Common myeloid progenitor, CD34-positive (primary cell): ENCODE measurements at regions of chr3 and their contacts with region 1.

Region 1: DNA sequence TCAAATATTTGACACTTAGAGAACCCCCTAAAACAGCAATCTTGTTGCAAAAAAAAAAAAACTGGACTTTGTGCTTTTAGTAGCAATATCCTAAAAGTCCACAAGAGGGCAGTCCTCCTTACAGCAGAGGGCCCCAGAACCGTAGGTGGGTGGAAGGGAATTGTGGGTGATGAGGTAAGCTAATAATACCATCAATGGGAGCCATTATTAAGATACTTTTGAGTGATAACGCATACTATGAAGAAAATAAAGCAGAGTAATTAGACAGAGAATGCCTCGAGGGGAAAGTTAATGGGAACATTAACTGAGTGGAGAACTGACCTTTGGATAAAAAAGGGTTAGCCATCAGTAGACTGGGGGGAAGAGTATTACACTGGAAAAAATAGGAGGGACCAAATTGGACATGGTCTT is 229.9 kb downstream of the THRB start:
- DNase-seq: peak; percentile 73 to 79 (median 77)
- H3K4me3 ChIP-seq: no peak overlapping the region
- H3K27ac ChIP-seq: no peak overlapping the region
- H3K4me1 ChIP-seq: peaks cover 0 to 19% (median 5%) of the 10 kb centered on the region in 4 experiments
- H3K27me3 ChIP-seq: no peaks in the 10 kb centered on the region

Region 2: DNA sequence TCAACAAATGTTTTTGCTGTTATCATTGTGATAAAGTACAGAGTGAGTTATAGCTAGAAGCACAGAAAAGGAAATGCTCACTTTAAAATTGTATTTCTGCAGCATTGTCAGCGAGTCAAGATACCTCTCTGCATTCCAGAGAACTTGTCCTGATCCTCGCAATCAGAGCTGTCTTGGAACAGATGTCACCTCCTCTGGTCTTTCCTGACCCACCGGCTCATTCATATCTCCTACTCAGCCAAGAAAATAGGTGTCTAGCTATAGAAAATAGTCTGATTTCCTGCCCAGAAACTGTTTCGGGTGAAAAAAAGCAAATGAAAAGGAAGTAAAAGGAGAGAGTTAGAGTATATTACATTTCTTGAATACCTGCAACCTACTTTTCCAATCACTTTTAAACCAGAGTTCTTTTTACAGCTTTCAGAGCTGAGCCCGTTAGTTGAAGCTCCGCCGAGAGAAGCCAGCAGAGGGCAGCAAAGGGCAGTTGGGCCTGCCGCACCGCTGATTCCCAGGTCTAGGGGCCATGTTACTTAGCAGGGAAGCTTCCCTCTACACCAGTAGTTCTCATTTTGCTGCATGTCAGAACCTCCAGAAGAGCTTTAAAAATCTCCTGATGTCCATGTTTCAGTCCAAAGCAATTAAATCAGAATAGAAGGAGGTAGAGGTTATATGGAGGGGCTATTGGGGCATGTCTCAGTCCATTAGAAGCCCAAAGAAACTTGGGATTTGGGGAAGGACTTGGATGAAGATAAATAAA is 415.6 kb after region 1 on chr3:
- CTCF ChIA-PET with region 1: interaction called, 15 read pairs
- POLR2A ChIA-PET with region 1: no interaction called
- DNase-seq: peak; percentile 69 to 82 (median 80)
- H3K4me3 ChIP-seq: no peak overlapping the region
- H3K27ac ChIP-seq: no peak overlapping the region
- H3K4me1 ChIP-seq: peaks cover 12 to 33% (median 23%) of the 10 kb centered on the region in 4 experiments
- H3K27me3 ChIP-seq: peaks cover 0 to 4% (median 0%) of the 10 kb centered on the region in 5 experiments